A549 (cell line): ENCODE measurements at regions of chr2 and their contacts with region 1.

Region 1: GRCh38 chr2:177724398-177725287 is 332.1 kb downstream of the AGPS start:
- DNase-seq: peak; percentile 44 to 54
- ATAC-seq: peak; percentile 91 to 95
- H3K4me3 ChIP-seq: no peak overlapping the region
- H3K27ac ChIP-seq: no peak overlapping the region
- H3K4me1 ChIP-seq: no peaks in the 10 kb centered on the region
- CTCF ChIP-seq: peak; percentile 93
- EP300 ChIP-seq: no peak
- POLR2A ChIP-seq: no peak
- RAD21 ChIP-seq: peak; percentile 93 to 94

Region 2: DNA sequence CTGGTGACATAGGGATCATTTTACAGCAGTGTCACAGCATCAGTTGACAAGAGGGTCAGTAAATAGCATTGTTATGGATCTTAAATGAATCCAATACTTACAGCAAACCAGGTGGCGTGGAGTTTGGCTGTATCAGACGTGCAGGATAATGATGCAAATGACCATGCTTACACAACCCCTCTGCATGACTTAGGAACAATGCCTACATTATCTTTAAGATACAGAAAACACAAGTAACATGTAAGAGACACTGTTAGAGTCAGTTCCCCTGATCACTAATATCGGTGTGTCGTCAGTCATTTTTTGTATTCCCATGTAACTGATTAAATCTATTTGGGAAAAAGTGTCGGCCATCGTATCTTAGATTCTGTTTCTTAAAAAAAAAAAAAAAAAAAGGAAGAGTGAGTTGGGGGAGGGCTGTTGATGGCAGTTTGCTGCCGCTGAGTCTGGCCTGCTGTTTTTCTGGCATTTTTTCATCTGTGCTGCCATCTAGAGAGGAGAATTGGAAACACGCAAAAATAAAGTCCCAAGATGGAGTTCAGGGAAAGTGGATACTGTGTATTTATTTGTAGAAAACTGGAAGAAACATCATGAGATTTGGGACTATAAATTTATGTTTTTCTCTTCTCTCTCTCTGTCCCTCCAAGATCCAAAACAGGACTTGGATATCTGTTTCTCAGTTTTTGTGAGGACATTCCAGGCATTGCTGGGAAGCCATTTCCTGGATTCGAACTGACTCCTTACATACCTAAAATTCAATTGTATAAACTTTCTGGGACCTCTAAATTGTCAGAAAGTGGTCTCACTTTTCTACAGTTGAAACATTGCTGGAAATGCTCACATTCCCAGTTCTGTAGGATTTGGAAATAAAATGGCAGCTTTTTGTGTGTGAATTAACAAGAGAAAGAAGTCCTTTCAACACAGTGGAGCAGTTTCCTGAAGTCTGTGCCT is 392.3 kb before region 1 on chr2:
- CTCF ChIA-PET with region 1: interaction called, 24 read pairs
- POLR2A ChIA-PET with region 1: no interaction called
- DNase-seq: peak; percentile 32 to 69
- ATAC-seq: peak; percentile 86 to 91
- H3K4me3 ChIP-seq: no peak overlapping the region
- H3K27ac ChIP-seq: peak overlapping the region; percentile 10 to 69; a peak in 3 of 6 replicates
- H3K4me1 ChIP-seq: peaks cover 12% of the 10 kb centered on the region; the same call in 2 of the 3 replicates
- CTCF ChIP-seq: peak; percentile 83
- EP300 ChIP-seq: no peak
- POLR2A ChIP-seq: no peak
- RAD21 ChIP-seq: peak; percentile 86 to 90

Region 3: GRCh38 chr2:177489719-177490301 is 234.8 kb before region 1 on chr2:
- CTCF ChIA-PET with region 1: interaction called, 25 read pairs
- POLR2A ChIA-PET with region 1: no interaction called
- DNase-seq: peak; percentile 15 to 42
- ATAC-seq: peak in 1 of 2 experiments; percentile 75; a peak in 3 of 6 replicates
- H3K4me3 ChIP-seq: no peak overlapping the region
- H3K27ac ChIP-seq: no peak overlapping the region
- H3K4me1 ChIP-seq: no peaks in the 10 kb centered on the region
- CTCF ChIP-seq: peak; percentile 75
- EP300 ChIP-seq: no peak
- POLR2A ChIP-seq: no peak
- RAD21 ChIP-seq: peak; percentile 56

Region 4: DNA sequence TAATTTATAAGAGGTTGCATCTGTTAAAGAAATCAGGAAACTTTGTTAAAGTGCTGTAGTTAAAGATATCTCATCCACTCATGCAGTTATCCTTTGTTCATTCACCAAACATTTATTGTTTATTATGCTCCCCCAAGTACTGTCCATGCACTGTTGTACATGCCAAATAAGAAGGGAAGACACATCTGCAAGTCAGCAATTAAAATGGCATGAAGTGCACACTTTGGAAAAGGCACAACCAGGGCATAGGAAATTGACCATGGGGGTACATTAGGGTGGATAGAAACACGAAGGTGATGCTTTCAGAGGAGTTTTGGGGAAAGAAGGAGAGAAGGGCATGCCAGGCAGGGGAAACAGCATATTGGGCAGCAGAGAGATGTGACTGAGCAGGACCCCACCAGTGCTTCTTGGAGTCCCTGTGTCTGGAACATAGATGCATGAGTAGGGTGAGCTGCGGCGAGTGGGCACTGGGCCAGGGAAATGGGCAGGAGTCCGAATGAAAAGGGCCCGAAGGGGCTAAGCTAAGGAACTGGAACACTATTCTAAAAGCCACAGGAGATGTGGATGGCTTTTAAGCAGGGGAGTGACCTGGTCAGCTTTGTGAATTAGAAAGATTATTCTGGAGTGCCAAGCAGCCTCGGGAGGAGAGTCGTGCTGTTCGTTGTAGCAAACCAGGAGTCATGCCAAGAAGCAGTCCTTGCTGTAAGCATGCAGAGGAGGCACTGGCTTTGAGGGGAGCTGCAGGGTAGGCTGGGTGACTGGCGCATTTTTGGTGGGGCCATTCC is 15.8 kb before region 1 on chr2:
- CTCF ChIA-PET with region 1: interaction called, 30 read pairs
- POLR2A ChIA-PET with region 1: no interaction called
- DNase-seq: no peak
- ATAC-seq: no peak
- H3K4me3 ChIP-seq: no peak overlapping the region
- H3K27ac ChIP-seq: no peak overlapping the region
- H3K4me1 ChIP-seq: no peaks in the 10 kb centered on the region
- CTCF ChIP-seq: no peak
- EP300 ChIP-seq: no peak
- POLR2A ChIP-seq: no peak
- RAD21 ChIP-seq: no peak

Region 5: DNA sequence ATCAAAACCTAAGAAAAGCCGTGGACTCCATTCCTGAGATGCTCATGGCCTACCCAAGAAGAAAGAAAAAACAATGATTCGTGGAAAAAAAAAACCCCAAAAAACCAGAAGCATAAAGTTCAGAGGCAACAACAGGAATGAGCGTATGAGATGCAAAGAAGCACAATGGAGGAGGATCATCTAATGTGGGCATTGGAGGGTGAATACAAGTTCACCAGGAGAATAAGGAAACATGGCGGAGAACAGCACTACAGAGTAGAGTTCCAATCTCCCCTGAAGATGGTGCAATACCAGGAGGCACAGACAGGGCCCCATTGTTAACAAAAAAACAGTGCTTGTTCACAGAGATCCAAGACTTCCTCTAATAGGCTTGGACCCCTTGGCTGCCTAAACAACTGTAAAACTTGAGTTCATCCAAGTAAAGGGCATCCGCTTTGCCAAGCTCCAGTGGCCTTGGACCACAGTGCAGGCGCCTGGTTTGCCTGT is 10.7 kb after region 1 on chr2:
- CTCF ChIA-PET with region 1: interaction called, 28 read pairs
- POLR2A ChIA-PET with region 1: no interaction called
- DNase-seq: no peak
- ATAC-seq: no peak
- H3K4me3 ChIP-seq: no peak overlapping the region
- H3K27ac ChIP-seq: no peak overlapping the region
- H3K4me1 ChIP-seq: no peaks in the 10 kb centered on the region
- CTCF ChIP-seq: no peak
- EP300 ChIP-seq: no peak
- POLR2A ChIP-seq: no peak
- RAD21 ChIP-seq: no peak

Region 6: DNA sequence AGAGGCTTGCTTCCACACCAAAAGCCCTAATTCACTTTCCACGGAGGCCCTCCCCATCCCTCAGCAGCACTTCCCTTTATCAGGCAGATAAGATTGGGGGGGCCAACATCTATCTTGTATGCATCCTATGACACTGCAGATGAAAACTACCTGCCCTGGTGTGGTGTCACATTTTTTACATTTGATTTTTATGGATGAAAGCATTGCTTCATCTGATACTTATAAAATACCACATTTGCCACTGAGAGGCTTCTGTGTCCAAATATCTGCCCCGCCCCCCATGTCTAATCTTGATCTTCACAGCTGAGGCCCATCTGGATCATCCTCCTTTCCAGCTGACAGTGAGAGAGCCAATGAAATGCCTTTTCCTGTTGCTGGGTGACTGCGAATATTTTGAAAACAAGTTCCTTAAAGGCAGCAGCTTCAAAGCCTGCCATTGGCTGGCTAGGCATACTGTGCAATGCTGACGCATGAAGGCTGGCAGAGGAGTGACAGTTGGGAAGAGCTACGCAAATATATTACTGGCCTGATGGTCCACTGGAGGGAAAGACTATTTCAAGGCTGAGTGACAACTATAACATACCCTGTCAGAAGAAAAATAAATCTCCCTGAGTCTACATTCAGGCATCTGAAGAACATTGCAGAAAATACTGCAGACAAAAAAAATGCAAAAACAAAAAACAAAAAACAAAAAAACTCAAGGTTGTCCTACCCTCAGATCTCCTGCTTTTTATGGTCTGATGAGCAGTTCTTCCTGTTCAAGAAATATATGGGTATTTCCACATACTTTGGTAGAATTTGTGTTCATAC is 29.2 kb after region 1 on chr2:
- CTCF ChIA-PET with region 1: interaction called, 11 read pairs
- POLR2A ChIA-PET with region 1: no interaction called
- DNase-seq: peak; percentile 18 to 84
- ATAC-seq: peak; percentile 72 to 89
- H3K4me3 ChIP-seq: no peak overlapping the region
- H3K27ac ChIP-seq: no peak overlapping the region
- H3K4me1 ChIP-seq: no peaks in the 10 kb centered on the region; the same call in 2 of the 3 replicates
- CTCF ChIP-seq: no peak
- EP300 ChIP-seq: no peak
- POLR2A ChIP-seq: no peak
- RAD21 ChIP-seq: no peak

Region 7: GRCh38 chr2:178057179-178057680 is 332.6 kb after region 1 on chr2:
- CTCF ChIA-PET with region 1: no interaction called
- POLR2A ChIA-PET with region 1: no interaction called
- DNase-seq: no peak
- ATAC-seq: no peak
- H3K4me3 ChIP-seq: no peak overlapping the region
- H3K27ac ChIP-seq: no peak overlapping the region
- H3K4me1 ChIP-seq: no peaks in the 10 kb centered on the region
- CTCF ChIP-seq: no peak
- EP300 ChIP-seq: no peak
- POLR2A ChIP-seq: no peak
- RAD21 ChIP-seq: no peak